CD4-positive, alpha-beta T cell (primary cell): ENCODE measurements at regions of chr16 and their contacts with region 1.

Region 1: DNA sequence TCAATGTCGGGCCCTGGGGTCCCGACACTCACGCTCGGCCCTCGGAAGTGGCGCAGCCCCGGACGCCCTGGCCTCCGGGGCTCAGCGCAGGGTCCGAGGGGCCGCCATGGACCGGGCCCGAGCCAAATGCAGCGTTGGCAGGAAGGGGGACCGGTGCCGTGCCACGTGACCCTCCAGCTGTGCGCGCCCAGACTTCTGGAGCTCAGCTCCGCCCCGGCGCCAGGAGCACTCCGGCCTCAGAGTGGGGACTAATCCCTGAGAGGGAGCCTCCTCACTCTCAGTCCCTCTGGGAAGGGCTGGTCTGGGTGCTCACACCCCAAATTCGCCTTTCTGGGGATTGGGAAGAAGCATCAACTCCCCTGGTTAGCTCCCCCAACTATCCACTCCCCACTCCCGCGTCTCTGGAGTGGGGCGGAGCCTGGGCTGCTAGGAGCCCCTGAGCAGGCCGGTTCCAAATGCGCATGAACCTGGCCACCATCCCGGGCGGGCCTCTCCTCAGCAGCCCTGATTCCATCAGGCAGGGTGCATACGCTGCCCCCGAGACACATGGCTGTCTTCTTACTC is at the start of gene B3GNT9:
- DNase-seq: peak in 5 of 14 experiments; percentile 11 to 63 (median 51)
- ATAC-seq: peak; percentile 27
- H3K4me3 ChIP-seq: peak within 1 kb of the TSS; percentile 57
- H3K4me3 Mint-ChIP-seq: peak within 1 kb of the TSS; percentile 79
- H3K27ac ChIP-seq: no peak within 1 kb of the TSS
- H3K27ac Mint-ChIP-seq: peak within 1 kb of the TSS; percentile 55
- H3K4me1 ChIP-seq: peaks cover 51% of the 10 kb centered on the region
- H3K4me1 Mint-ChIP-seq: peaks cover 24% of the 10 kb centered on the region
- H3K27me3 ChIP-seq: no peaks in the 10 kb centered on the region
- H3K27me3 Mint-ChIP-seq: peaks cover 14% of the 10 kb centered on the region
- CTCF ChIP-seq: no peak
- total RNA-seq, gene B3GNT9: 2.0 to 2.5 TPM

Region 2: GRCh38 chr16:67456391-67457081 is 305.6 kb after region 1 on chr16:
- CTCF ChIA-PET with region 1: no interaction called
- POLR2A ChIA-PET with region 1: no interaction called
- intact Hi-C with region 1: loop called in 1 of 2 experiments (anchors 10 kb)
- DNase-seq: no peak
- ATAC-seq: peak; percentile 32
- H3K4me3 ChIP-seq: no peak overlapping the region
- H3K4me3 Mint-ChIP-seq: no peak overlapping the region
- H3K27ac ChIP-seq: no peak overlapping the region
- H3K27ac Mint-ChIP-seq: no peak overlapping the region
- H3K4me1 ChIP-seq: peaks cover 14% of the 10 kb centered on the region
- H3K4me1 Mint-ChIP-seq: peaks cover 22% of the 10 kb centered on the region
- H3K27me3 ChIP-seq: no peaks in the 10 kb centered on the region
- H3K27me3 Mint-ChIP-seq: no peaks in the 10 kb centered on the region
- CTCF ChIP-seq: no peak